Dendritic cell treated with granulocyte-macrophage colony-stimulating factor and Interleukin-4, amounts not matched to agents 40 ng/mL and 50 ng/mL, for 4 days (primary cell): ENCODE measurements at regions of chr22 and their contacts with region 1.

Region 1: GRCh38 chr22:34111210-34111824 is 191.0 kb upstream of the LARGE1 start:
- H3K4me3 Mint-ChIP-seq: no peak overlapping the region
- H3K27ac Mint-ChIP-seq: no peak overlapping the region
- H3K4me1 Mint-ChIP-seq: no peaks in the 10 kb centered on the region
- H3K27me3 Mint-ChIP-seq: no peaks in the 10 kb centered on the region

Region 2: DNA sequence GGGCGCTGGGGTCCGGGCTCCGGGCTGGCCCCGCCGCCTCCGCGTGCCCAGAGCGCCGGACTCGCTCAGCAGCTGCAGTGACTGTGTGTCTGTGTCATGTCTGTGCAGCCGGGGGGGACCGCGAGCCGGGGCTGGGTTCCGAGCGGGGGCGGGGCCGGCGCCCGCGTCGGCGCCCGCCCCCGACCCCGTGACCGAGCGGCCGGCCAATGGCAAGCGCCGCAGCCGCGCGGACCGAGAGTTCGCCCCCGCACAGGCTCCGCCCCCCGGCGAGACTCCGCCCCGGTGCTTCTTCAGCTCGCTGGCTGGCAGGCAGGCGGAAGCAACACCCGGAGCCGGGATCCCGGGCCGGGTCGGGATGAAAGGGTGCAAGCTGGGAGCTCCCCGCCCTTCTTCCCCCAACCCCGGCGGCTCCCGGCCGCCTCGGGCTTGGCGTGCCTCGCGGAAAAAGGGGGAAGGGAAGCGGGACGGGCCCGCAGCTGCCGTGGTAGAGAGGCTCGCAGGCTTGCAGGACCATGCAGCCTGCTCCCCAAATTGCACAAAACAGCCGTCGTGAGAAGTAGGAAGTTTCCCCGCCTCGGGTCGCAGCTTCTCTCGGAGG is 190.3 kb before region 1 on chr22:
- intact Hi-C with region 1: loop called (anchors 5 kb)
- H3K4me3 Mint-ChIP-seq: peak overlapping the region; percentile 72
- H3K27ac Mint-ChIP-seq: no peak overlapping the region
- H3K4me1 Mint-ChIP-seq: peaks cover 24% of the 10 kb centered on the region
- H3K27me3 Mint-ChIP-seq: peaks cover 83% of the 10 kb centered on the region